Caco-2 (cell line): ENCODE measurements at regions of chr17 and their contacts with region 1.

Region 1: DNA sequence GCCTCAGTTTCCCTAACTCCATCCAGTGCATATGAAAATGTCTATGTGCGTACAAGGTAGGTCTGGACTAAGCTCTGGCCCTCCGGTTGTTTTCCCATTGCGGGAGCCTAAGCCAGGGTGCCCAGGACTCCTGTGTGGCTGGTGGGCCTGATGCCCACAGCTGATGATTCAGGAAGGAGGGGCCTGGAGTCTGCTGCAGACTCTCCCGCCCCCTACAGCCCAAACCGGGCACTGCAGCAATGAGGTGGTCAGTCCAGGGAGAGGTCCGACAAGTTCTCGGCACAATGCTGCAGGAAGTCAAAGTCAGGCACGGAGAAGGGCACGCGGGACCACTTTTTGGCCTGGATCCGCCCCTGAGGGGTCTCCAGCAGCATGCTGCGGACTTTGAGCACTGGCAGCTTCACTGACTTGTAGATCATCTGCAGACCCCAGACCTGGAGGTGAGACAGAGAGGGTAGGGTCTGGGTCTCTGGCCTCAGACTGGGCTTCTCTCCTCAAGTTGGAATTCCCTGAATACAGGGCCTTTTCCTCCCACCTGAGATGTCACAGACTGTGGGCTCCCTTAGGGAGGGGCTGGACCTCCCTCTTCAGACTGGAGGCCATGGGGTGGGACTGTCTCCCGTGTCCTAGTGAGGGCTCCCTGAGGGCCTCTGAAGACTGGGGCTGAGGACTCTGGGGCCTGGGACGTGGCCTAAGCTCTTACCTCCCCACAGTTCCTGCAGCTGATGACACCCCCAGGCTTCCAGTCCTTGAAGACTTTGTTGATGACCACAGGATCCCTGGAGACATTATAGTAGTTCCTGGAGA is 3.4 kb upstream of the ZNF385C start:
- DNase-seq: peak; percentile 74 to 84
- H3K4me3 ChIP-seq: no peak overlapping the region
- H3K4me3 Mint-ChIP-seq: no peak overlapping the region
- H3K27ac Mint-ChIP-seq: no peak overlapping the region
- H3K4me1 ChIP-seq: peaks cover 8% of the 10 kb centered on the region
- H3K4me1 Mint-ChIP-seq: no peaks in the 10 kb centered on the region
- H3K27me3 ChIP-seq: 0 out of 2 replicates have a peak, but pooled peaks cover 2% of the 10 kb centered on the region
- H3K27me3 Mint-ChIP-seq: peaks cover 3% of the 10 kb centered on the region
- CTCF ChIP-seq: peak; percentile 84 to 89

Region 2: GRCh38 chr17:41966463-41967140 is 135.1 kb before region 1 on chr17 and contains the start of gene CNP:
- CTCF ChIA-PET with region 1: interaction called, 4 read pairs
- POLR2A ChIA-PET with region 1: no interaction called
- intact Hi-C with region 1: loop called (anchors 1 kb)
- DNase-seq: peak; percentile 92 to 96
- H3K4me3 ChIP-seq: peak within 1 kb of the TSS; percentile 83
- H3K4me3 Mint-ChIP-seq: peak within 1 kb of the TSS; percentile 79
- H3K27ac Mint-ChIP-seq: peak within 1 kb of the TSS; percentile 0
- H3K4me1 ChIP-seq: peaks cover 20% of the 10 kb centered on the region
- H3K4me1 Mint-ChIP-seq: peaks cover 23% of the 10 kb centered on the region
- H3K27me3 ChIP-seq: no peaks in the 10 kb centered on the region
- H3K27me3 Mint-ChIP-seq: no peaks in the 10 kb centered on the region
- CTCF ChIP-seq: no peak
- total RNA-seq, gene CNP: 90.1 and 94.5 TPM in 2 replicates

Region 3: DNA sequence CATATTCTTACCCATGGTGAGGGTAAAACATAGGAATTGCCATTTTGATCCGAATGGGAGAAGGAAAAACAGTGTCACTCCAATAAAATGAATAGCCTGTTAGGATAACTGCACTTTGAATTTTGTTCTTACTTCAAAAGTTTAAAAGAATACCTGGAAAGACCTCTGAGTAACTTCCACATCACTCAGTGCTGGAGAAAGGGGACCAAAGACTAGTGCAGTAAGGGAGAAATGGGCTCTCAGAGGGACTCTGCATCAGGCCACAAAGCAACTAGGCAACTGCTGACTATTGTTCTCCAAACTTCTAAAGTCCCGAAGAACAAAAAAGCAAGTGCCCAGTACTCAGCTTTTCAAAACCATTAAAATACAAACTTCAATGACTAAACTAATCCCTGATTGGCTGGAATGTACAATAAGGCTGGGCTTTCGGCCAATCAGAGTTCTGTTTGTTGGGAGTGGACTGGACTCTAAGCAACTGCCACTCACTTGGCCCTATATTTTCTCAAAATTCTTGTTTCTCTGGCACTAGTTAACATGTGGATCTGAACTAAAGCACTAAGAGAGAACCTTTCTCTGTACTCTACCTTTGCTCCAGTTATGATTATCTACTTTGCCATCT is 90.7 kb before region 1 on chr17:
- CTCF ChIA-PET with region 1: no interaction called
- POLR2A ChIA-PET with region 1: no interaction called
- intact Hi-C with region 1: no loop called
- DNase-seq: peak in 1 of 2 experiments; percentile 46
- H3K4me3 ChIP-seq: no peak overlapping the region
- H3K4me3 Mint-ChIP-seq: no peak overlapping the region
- H3K27ac Mint-ChIP-seq: peak overlapping the region; percentile 39
- H3K4me1 ChIP-seq: peaks cover 19% of the 10 kb centered on the region; the same call in 1 of the 2 replicates
- H3K4me1 Mint-ChIP-seq: peaks cover 11% of the 10 kb centered on the region
- H3K27me3 ChIP-seq: no peaks in the 10 kb centered on the region
- H3K27me3 Mint-ChIP-seq: no peaks in the 10 kb centered on the region
- CTCF ChIP-seq: no peak

Region 4: DNA sequence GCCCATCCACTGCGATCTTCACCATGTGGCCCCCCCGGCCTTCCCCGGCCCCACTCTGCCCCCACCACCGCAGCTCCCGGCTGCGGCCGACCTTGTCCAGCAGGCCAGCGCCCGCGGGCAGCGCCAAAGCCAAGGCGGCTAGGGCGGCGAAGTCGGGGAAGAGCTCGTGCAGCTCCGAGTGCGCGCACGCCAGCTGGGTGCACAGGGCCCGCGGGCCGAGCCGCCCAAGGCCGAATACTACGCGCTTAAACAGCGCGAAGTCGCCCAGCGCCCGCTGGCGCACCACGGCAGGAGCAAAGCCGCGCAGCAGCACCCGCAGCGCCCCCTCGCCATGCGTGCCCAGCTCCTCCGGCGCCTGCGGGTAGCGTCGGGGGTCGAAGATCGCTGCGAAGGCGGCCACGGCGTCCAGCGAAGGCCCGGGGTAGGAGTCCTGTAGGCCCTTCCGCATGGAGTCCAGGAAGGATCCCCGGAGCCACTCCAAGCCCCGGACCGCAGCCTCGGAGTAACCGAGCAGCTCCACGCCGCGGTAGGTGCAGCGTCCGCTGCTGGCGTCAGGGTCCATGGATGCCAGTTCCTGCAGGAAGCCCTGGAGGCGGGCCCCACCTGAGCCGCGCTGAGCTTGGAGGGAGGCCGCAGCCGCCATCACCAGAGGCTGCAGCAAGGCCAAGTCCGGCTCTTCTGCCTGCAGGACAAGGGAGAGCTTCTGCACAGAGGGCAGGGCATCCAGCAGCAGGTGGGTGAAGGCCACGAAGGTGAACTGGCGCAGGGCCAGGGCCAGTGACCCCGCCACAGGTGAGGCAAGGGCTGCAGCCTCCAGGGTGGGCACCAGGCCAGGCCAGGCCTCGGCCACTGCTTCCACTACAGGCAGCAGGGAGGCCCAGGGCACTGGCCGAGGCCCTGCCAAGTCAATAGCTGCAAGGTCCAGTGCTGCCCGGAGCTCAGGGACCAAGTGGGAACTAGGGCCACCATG is 61.6 kb before region 1 on chr17:
- CTCF ChIA-PET with region 1: no interaction called
- POLR2A ChIA-PET with region 1: no interaction called
- intact Hi-C with region 1: no loop called
- DNase-seq: no peak
- H3K4me3 ChIP-seq: no peak overlapping the region
- H3K4me3 Mint-ChIP-seq: no peak overlapping the region
- H3K27ac Mint-ChIP-seq: no peak overlapping the region
- H3K4me1 ChIP-seq: no peaks in the 10 kb centered on the region
- H3K4me1 Mint-ChIP-seq: no peaks in the 10 kb centered on the region
- H3K27me3 ChIP-seq: no peaks in the 10 kb centered on the region
- H3K27me3 Mint-ChIP-seq: no peaks in the 10 kb centered on the region
- CTCF ChIP-seq: no peak

Region 5: GRCh38 chr17:42067351-42068091 is 34.2 kb before region 1 on chr17:
- CTCF ChIA-PET with region 1: interaction called, 9 read pairs
- POLR2A ChIA-PET with region 1: interaction called, 3 read pairs
- intact Hi-C with region 1: loop called (anchors 1 kb)
- DNase-seq: peak; percentile 74 to 82
- H3K4me3 ChIP-seq: no peak overlapping the region
- H3K4me3 Mint-ChIP-seq: no peak overlapping the region
- H3K27ac Mint-ChIP-seq: no peak overlapping the region
- H3K4me1 ChIP-seq: peaks cover 10% of the 10 kb centered on the region
- H3K4me1 Mint-ChIP-seq: no peaks in the 10 kb centered on the region
- H3K27me3 ChIP-seq: no peaks in the 10 kb centered on the region
- H3K27me3 Mint-ChIP-seq: peaks cover 3% of the 10 kb centered on the region
- CTCF ChIP-seq: peak; percentile 85 to 91

Region 6: DNA sequence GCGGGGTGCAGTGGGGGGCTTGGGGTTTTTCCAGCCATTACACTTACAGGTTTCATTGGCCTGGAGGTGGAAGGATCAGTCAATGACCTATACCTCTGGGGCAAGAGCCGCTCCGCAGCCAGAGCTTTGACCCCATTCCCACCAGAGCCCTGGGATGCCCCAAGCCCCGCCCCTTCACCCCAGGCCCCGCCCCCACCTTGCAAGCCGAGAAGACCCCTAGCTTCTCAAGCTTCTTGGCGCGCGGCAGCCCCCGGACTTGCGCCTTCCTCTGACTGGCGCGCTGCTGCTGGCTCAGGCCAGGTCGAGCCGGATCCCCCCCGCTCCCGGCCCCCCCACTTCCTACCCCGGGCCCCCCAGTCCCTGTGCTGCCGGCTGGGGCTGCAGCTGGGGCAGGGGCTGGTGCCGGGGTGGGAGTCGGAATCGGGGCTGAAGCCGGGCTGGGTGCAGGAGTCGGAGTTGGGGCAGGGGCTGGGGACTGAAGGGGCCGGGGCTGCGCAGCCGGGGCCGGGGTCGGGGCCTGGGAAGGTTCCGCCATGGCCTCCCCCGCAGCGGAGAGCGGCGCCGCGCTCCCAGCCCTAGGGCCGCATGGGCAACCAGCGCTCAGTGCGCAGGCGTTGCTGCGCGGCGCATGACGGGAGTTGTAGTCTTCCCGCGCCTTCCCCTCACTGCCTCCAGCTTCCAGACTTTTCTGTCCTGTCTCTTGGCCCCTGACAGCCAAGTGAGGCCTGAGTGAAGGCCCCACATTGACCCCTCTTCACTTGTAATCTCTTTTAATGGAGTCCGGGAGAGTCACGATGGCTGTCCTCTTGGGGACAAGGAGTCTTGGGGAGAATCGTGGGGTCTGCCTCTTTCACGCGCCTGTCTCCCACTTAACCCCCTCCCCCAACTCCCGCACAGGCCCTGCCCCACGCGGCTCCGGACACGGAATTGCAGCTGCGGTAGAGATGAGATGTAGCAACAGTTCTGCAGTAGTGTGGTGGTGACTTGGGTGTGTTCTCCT is 19.4 kb after region 1 on chr17 and contains the start of gene KAT2A:
- CTCF ChIA-PET with region 1: no interaction called
- POLR2A ChIA-PET with region 1: no interaction called
- intact Hi-C with region 1: no loop called
- DNase-seq: peak; percentile 84 to 87
- H3K4me3 ChIP-seq: peak within 1 kb of the TSS; percentile 76
- H3K4me3 Mint-ChIP-seq: peak within 1 kb of the TSS; percentile 59
- H3K27ac Mint-ChIP-seq: peak within 1 kb of the TSS; percentile 29
- H3K4me1 ChIP-seq: peaks cover 6% of the 10 kb centered on the region
- H3K4me1 Mint-ChIP-seq: no peaks in the 10 kb centered on the region
- H3K27me3 ChIP-seq: no peaks in the 10 kb centered on the region
- H3K27me3 Mint-ChIP-seq: no peaks in the 10 kb centered on the region
- CTCF ChIP-seq: no peak
- total RNA-seq, gene KAT2A: 46.5 and 56.2 TPM in 2 replicates